Right ventricle myocardium superior (tissue), 1 donor: ENCODE measurements at regions of chr18 and their contacts with region 1.

Region 1: DNA sequence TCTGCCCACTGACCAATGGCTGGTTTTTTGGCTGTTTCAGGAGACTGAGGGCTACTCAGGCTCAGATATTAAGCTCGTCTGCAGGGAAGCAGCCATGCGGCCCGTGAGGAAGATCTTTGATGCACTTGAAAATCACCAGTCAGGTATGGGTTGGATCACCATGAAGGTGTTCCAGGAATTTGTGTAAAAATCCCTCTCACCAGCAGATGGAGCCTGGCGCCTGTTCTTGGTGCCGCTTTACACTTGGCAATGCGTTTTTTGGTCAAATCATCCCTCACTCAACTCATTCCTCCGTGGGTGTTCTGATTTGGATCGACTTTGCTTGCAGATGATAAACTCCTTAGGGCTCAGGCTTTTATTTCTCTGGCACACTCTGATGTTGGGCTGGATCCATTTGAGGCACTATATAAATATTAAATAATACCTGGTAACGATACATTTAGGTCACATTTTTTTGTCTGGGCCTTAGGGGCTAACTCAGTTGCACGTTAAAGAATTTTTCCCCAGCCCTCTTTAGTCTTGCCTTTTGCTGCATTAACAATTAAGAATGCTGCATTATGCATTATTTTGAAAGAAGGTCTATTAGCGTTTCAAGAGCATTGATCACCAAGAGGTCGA is 50.0 kb downstream of the HDHD2 start:
- DNase-seq: no peak
- ATAC-seq: peak; percentile 76

Region 2: GRCh38 chr18:46408334-46408987 is 691.9 kb before region 1 on chr18:
- intact Hi-C with region 1: no loop called
- DNase-seq: no peak
- ATAC-seq: no peak

Region 3: GRCh38 chr18:46899274-46899948 is 200.9 kb before region 1 on chr18:
- intact Hi-C with region 1: no loop called
- DNase-seq: no peak
- ATAC-seq: no peak

Region 4: GRCh38 chr18:47204908-47205522 is 104.7 kb after region 1 on chr18:
- intact Hi-C with region 1: loop called (anchors 5 kb)
- DNase-seq: no peak
- ATAC-seq: peak; percentile 67